ENCODE measurements at regions of chr3 and their contacts with region 1.

Region 1: DNA sequence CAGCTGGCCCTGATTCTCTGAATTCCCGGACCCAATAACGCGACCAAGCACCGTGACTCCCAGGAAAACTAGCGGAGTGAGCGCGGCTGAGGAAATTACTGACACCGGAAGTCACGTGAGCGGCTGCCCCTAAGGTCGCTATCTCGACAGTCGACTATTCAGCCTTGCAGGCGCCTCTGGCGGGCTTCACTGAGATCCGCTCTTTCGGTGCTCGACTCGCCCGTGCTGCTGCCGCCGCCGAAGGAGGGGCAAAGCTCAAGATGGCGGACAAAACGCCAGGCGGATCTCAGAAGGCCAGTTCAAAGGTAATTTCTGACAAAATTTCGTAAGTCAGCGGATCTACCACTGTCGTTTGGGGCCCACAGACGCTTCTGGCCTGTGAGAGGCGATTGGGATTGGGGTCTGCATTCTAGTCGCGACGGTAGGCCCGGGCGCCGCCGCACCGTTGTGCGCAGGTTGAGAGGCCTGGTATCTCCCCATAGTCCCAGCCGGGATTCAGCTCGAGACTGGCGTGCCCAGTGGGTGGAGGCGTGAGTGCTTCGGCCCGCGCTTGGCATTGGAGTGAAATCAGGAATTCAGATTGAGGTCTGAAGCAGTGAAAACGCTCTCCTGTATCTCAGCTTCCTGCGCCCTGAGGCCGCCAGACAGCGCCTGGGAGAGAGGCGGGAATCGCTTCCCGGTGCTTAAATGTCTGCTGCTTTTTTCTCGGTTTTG is at the start of gene U2SURP:
- DNase-seq: peak; percentile 84 to 96
- ATAC-seq: peak; percentile 94 to 99 (median 97)
- H3K4me3 ChIP-seq: peak within 1 kb of the TSS; percentile 80
- H3K4me3 Mint-ChIP-seq: peak within 1 kb of the TSS; percentile 99
- H3K27ac ChIP-seq: peak within 1 kb of the TSS; percentile 90
- H3K27ac Mint-ChIP-seq: peak within 1 kb of the TSS; percentile 99 to 100
- H3K4me1 ChIP-seq: peaks cover 13% of the 10 kb centered on the region
- H3K4me1 Mint-ChIP-seq: peaks cover 41 to 45% of the 10 kb centered on the region in 2 donors
- H3K27me3 ChIP-seq: no peaks in the 10 kb centered on the region
- H3K27me3 Mint-ChIP-seq: peaks cover 3 to 7% of the 10 kb centered on the region in 2 donors
- CTCF ChIP-seq: no peak
- total RNA-seq, gene U2SURP: 165 to 179 (median 172) TPM

Region 2: DNA sequence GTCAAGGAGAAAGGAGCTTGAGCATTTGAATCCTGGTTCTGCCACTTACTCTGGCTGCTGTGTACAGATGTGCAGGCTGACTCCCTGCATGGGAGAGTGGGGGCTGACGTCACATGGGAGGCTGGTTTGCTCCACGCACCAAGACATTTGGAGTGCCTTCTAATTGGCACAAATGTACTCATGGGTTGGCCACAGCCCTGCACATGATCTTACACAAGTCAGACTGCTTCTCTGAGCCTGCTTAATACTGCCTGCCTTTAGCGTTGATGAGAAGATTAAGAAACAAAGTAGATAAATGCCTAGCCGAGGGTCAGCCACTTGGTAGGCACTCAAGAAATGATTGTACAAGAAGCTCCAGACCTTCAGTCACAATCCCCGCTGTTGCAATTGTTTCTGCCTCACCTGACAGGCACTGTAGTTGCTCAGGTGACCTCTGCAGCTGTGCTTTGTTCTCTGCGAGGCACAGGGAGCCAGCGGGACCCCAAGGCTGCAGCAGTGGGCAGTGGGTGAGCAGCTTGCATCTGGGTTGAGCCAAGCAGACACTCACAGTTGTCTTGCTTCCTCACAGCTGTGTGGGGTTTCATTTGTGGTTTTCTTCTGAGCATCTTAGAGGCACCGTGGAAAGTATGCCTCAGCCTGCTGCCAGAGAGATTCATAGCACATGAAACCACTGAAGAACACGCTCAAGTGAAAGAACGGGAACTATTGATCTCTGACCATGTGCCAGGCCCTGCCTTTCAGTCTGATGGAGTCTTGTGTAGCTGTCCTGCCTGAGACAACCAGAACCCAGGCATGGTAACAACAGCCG is 1205.2 kb before region 1 on chr3:
- intact Hi-C with region 1: no loop called
- DNase-seq: peak; percentile 24 to 78
- ATAC-seq: peak; percentile 72 to 83 (median 81)
- H3K4me3 ChIP-seq: no peak overlapping the region
- H3K4me3 Mint-ChIP-seq: peak overlapping the region; percentile 88
- H3K27ac ChIP-seq: peak overlapping the region; percentile 88
- H3K27ac Mint-ChIP-seq: peak overlapping the region; percentile 95
- H3K4me1 ChIP-seq: peaks cover 53% of the 10 kb centered on the region
- H3K4me1 Mint-ChIP-seq: peaks cover 52 to 58% of the 10 kb centered on the region in 2 donors
- H3K27me3 ChIP-seq: no peaks in the 10 kb centered on the region
- H3K27me3 Mint-ChIP-seq: no peaks in the 10 kb centered on the region
- CTCF ChIP-seq: no peak

Region 3: GRCh38 chr3:142447852-142448823 is 553.4 kb before region 1 on chr3 and contains the start of gene XRN1:
- intact Hi-C with region 1: loop called (anchors 1 kb)
- DNase-seq: peak; percentile 96 to 97
- ATAC-seq: peak; percentile 94 to 99 (median 96)
- H3K4me3 ChIP-seq: peak within 1 kb of the TSS; percentile 96
- H3K4me3 Mint-ChIP-seq: peak within 1 kb of the TSS; percentile 100
- H3K27ac ChIP-seq: peak within 1 kb of the TSS; percentile 97
- H3K27ac Mint-ChIP-seq: peak within 1 kb of the TSS; percentile 99 to 100
- H3K4me1 ChIP-seq: peaks cover 12% of the 10 kb centered on the region
- H3K4me1 Mint-ChIP-seq: peaks cover 45 to 46% of the 10 kb centered on the region in 2 donors
- H3K27me3 ChIP-seq: no peaks in the 10 kb centered on the region
- H3K27me3 Mint-ChIP-seq: no peaks in the 10 kb centered on the region
- CTCF ChIP-seq: no peak
- total RNA-seq, gene XRN1: 116 to 141 (median 128) TPM

Region 4: GRCh38 chr3:142963516-142964448 is 37.7 kb before region 1 on chr3 and contains the start of gene PAQR9:
- intact Hi-C with region 1: no loop called
- DNase-seq: peak in 1 of 2 donors; percentile 15
- ATAC-seq: peak; percentile 38 to 58 (median 42)
- H3K4me3 ChIP-seq: no peak within 1 kb of the TSS
- H3K4me3 Mint-ChIP-seq: peak within 1 kb of the TSS; percentile 85
- H3K27ac ChIP-seq: no peak within 1 kb of the TSS
- H3K27ac Mint-ChIP-seq: no peak within 1 kb of the TSS
- H3K4me1 ChIP-seq: peaks cover 8% of the 10 kb centered on the region
- H3K4me1 Mint-ChIP-seq: peaks cover 5 to 18% of the 10 kb centered on the region in 2 donors
- H3K27me3 ChIP-seq: peaks cover 21% of the 10 kb centered on the region
- H3K27me3 Mint-ChIP-seq: peaks cover 40 to 69% of the 10 kb centered on the region in 2 donors
- CTCF ChIP-seq: no peak
- total RNA-seq, gene PAQR9: not detected

Region 5: GRCh38 chr3:143056372-143056771 is 54.8 kb after region 1 on chr3:
- intact Hi-C with region 1: no loop called
- DNase-seq: no peak
- ATAC-seq: no peak
- H3K4me3 ChIP-seq: no peak overlapping the region
- H3K4me3 Mint-ChIP-seq: no peak overlapping the region
- H3K27ac ChIP-seq: no peak overlapping the region
- H3K27ac Mint-ChIP-seq: peak overlapping the region in 1 of 2 donors; percentile 50
- H3K4me1 ChIP-seq: no peaks in the 10 kb centered on the region
- H3K4me1 Mint-ChIP-seq: peaks cover 5% of the 10 kb centered on the region in 2 donors
- H3K27me3 ChIP-seq: no peaks in the 10 kb centered on the region
- H3K27me3 Mint-ChIP-seq: no peaks in the 10 kb centered on the region
- CTCF ChIP-seq: no peak

Region 6: DNA sequence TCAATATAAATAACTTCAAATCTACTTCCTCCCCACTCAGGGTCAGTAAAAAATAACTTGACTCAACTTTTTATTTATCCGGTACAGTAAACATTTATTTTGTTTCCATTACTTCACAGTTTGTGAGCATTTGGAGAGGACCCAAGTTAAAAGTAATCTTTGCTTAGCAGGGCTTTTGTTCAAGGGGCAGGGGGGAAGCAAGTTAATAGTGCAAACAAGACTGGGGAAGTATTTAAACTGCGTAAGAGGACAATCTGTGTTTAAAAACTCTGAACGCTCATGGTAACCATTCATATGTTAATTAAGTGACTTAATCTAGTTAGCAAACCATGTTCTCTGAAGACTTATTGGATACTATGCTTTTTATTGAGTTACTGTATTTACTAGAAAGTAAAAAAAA is 500.6 kb after region 1 on chr3:
- intact Hi-C with region 1: no loop called
- DNase-seq: no peak
- ATAC-seq: no peak
- H3K4me3 ChIP-seq: no peak overlapping the region
- H3K4me3 Mint-ChIP-seq: no peak overlapping the region
- H3K27ac ChIP-seq: no peak overlapping the region
- H3K27ac Mint-ChIP-seq: no peak overlapping the region
- H3K4me1 ChIP-seq: no peaks in the 10 kb centered on the region
- H3K4me1 Mint-ChIP-seq: no peaks in the 10 kb centered on the region
- H3K27me3 ChIP-seq: no peaks in the 10 kb centered on the region
- H3K27me3 Mint-ChIP-seq: no peaks in the 10 kb centered on the region
- CTCF ChIP-seq: no peak

Region 7: GRCh38 chr3:143972505-143973255 is 971.2 kb after region 1 on chr3:
- intact Hi-C with region 1: loop called (anchors 5 kb)
- DNase-seq: peak; percentile 59 to 91
- ATAC-seq: peak; percentile 10 to 47 (median 27)
- H3K4me3 ChIP-seq: peak overlapping the region; percentile 65
- H3K4me3 Mint-ChIP-seq: peak overlapping the region; percentile 89
- H3K27ac ChIP-seq: peak overlapping the region; percentile 90
- H3K27ac Mint-ChIP-seq: peak overlapping the region; percentile 82 to 94
- H3K4me1 ChIP-seq: peaks cover 9% of the 10 kb centered on the region
- H3K4me1 Mint-ChIP-seq: peaks cover 34 to 45% of the 10 kb centered on the region in 2 donors
- H3K27me3 ChIP-seq: no peaks in the 10 kb centered on the region
- H3K27me3 Mint-ChIP-seq: no peaks in the 10 kb centered on the region
- CTCF ChIP-seq: peak; percentile 32

Measured in natural killer cell (primary cell).